Activated CD4-positive, alpha-beta T cell treated with anti-CD3 and anti-CD28 coated beads, Interleukin-2, amount 10 ng/mL, durations not matched to agents 7 days and 5 days (primary cell): ENCODE measurements at regions of chr5 and their contacts with region 1.

Region 1: DNA sequence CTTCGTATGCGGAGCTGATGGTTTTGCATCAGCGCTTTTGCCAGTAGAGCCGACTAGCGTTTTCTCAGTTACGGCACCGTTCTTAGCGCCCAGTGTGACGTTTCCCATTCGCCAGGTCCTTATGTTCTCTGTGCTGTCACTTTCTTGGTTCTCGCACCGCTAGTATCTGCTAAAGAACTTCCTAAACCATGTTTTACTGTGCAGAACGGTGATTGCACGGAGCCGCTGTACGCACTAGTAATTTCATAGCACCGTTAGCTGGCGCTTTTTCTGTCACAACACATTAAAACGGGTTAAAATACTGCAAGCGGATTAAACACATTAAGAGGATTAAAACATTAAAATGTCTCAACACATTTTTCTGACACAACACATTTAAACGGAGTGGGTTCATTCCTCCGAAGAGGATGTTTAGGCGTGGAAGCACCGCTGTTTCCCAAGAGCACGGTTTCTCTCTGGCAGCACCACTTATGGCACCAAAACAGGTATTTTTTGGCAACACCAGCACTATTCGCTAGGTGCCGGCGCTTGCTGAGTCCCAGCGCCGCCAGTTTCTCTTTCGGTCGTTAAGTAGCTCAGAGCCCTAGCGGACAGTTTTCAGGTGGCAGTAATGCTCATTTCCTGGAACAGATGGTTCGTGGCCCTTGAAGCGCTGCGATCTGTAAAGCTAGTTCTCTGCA is 20.4 kb downstream of the ANXA2R start:
- DNase-seq: peak; percentile 94
- H3K4me3 Mint-ChIP-seq: peak overlapping the region; percentile 99
- H3K27ac Mint-ChIP-seq: peak overlapping the region; percentile 100
- H3K4me1 Mint-ChIP-seq: peaks cover 40% of the 10 kb centered on the region
- H3K27me3 Mint-ChIP-seq: no peaks in the 10 kb centered on the region

Region 2: DNA sequence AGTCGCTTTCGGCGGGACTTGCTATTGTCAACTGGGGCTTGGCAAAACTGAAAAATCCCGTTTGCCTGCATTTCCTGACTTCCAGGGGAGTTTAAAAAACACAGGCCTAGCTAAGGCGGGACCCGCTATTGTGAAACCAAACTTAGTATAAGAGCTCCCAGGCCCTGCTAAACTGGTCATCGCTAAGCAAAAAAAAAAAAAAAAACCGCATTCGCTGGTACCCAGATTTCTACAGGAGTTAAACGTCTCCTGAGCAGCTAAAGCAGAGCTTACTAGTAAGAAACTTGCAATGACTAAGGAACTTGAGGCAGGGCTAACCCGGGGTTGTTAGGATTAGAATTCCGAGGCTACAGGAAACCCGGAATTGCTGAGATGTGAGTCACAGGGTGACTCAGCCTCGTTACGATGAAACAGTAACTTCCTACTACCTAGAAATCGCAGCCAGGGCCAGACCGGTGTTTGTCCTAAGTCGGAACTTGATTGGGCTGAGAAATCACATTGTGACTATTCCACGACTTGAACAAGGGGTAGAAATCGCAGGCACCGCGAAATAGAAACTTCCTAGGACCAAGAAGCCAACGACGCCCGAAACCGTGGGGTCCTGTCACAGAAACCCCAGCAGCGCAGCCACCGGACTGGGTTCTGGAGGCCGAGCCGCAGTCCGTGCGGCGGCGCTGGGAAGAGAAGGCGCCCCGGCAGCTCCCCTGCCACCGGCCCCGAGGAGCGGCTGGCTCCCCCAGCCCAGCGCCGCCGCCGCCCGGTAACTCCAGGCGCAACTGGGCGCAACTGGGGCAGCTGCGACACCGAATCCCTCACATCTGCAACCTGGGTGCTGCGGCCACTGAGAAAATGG is 69.1 kb before region 1 on chr5:
- CTCF ChIA-PET with region 1: interaction called, 13 read pairs
- POLR2A ChIA-PET with region 1: interaction called, 6 read pairs
- DNase-seq: peak; percentile 65
- H3K4me3 Mint-ChIP-seq: peak overlapping the region; percentile 84
- H3K27ac Mint-ChIP-seq: peak overlapping the region; percentile 100
- H3K4me1 Mint-ChIP-seq: peaks cover 43% of the 10 kb centered on the region
- H3K27me3 Mint-ChIP-seq: no peaks in the 10 kb centered on the region

Region 3: DNA sequence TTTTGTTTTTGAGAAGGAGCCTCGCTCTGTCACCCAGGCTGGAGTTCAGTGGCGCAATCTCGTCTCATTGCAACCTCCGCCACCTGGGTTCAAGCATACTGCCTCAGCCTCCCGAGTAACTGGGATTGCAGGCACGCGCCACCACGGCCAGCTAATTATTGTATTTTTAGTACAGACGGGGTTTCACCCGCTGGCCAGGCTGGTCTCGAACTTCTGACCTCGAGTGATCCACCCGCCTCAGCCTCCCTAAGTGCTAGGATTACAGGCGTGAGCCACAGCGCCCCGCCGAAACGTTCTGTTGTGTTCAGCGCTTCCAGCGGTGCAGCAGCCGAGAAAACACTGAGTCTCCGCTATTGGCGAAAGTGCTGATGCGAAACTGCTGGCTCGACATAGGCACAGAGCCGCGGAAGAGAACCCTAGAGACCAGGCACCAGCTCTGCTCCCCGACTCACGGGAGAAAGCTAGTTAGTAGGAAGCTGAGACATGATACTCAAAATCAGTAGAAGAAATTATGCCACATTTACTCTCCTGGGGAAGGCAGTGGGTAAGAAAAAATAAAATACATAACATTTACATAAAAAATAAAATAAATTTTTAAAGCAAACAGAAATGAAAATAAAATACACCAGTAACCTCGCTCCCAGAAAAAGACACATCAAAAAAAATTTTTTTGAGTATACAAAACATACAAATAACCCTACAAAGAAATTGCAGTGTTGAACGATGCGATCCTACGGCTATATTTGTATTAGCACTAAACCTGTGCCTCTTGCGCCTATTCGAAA is 11.2 kb before region 1 on chr5:
- CTCF ChIA-PET with region 1: interaction called, 52 read pairs
- POLR2A ChIA-PET with region 1: interaction called, 67 read pairs
- DNase-seq: peak; percentile 90
- H3K4me3 Mint-ChIP-seq: peak overlapping the region; percentile 80
- H3K27ac Mint-ChIP-seq: peak overlapping the region; percentile 97
- H3K4me1 Mint-ChIP-seq: peaks cover 44% of the 10 kb centered on the region
- H3K27me3 Mint-ChIP-seq: no peaks in the 10 kb centered on the region

Region 4: DNA sequence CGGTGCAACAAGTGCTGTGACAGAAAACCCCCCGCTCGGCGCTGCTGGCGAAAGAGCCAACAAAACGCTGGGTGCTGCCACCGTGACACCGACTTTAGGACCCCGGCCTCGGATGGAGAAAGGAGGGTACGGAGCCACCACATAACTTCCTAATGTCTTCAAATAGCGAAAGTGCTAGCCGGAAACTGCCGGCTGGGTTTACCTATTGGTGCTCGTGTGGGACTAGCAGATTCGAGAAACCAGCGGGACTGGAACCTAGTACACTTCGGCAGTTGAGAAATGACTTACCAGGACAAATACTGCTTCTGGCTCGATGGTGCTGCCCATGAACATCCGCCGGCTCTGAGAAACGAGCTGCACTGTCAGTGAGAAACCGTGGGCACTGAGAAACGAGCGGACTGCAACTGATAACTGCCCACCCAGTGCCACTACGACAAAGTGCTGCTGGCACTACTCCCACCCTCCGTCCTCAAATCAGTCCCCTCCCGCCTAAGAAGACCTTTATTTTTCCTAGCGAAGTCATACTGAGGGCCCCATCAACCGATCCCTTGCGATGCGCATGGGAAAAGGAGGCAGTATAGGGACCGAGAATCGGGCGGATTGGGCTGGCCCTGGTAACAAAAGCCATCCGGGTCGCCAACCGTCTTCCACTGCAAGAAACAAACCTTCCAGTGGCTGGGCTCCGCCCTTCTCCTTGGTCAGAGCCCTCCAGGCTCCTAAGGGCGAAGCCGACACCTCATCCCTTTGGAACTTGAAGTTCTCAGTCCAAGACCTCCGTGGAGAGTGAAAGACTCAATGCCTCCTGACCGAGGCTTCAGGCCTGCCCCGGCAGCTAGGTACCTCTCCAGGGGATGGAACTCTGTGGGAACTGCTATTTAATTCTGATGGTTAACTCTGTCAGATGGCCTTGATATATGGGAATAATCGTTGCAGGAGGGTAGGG is 47.3 kb after region 1 on chr5:
- CTCF ChIA-PET with region 1: interaction called, 18 read pairs
- POLR2A ChIA-PET with region 1: interaction called, 25 read pairs
- DNase-seq: peak; percentile 90
- H3K4me3 Mint-ChIP-seq: peak overlapping the region; percentile 97
- H3K27ac Mint-ChIP-seq: peak overlapping the region; percentile 99
- H3K4me1 Mint-ChIP-seq: peaks cover 45% of the 10 kb centered on the region
- H3K27me3 Mint-ChIP-seq: no peaks in the 10 kb centered on the region

Region 5: DNA sequence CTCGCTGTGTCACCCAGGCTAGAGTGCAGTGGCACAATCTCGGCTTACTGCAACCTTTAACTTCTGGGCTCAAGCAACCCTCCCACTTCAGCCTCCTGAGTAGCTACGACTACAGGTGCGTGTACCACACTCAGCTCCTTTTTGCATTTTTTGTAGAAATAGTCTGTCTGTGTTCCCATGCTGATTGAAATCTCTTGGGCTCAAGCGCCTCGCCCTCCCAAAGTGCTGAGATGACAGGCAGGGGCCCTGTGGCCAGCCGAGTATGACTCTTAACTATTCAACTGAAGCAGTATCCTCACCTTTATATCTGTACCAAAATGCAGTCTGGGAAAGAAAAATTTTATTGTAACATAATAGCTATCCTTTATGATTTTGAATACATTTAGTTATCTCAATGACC is 160.1 kb after region 1 on chr5:
- CTCF ChIA-PET with region 1: no interaction called
- POLR2A ChIA-PET with region 1: no interaction called
- DNase-seq: no peak
- H3K4me3 Mint-ChIP-seq: no peak overlapping the region
- H3K27ac Mint-ChIP-seq: no peak overlapping the region
- H3K4me1 Mint-ChIP-seq: peaks cover 2% of the 10 kb centered on the region
- H3K27me3 Mint-ChIP-seq: no peaks in the 10 kb centered on the region